Uterus (tissue), 4 donors: ENCODE measurements at regions of chr11 and their contacts with region 1.

Region 1: GRCh38 chr11:114179234-114179941 is 116.8 kb upstream of the NNMT start:
- DNase-seq: peak; percentile 84 to 96
- H3K4me3 ChIP-seq: peak overlapping the region; percentile 41 to 47
- H3K27ac ChIP-seq: peak overlapping the region; percentile 98 to 100
- H3K4me1 ChIP-seq: peaks cover 34 to 36% of the 10 kb centered on the region in 2 donors
- H3K27me3 ChIP-seq: no peaks in the 10 kb centered on the region
- CTCF ChIP-seq: peak in 3 of 4 experiments; percentile 2 to 39 (median 6)
- POLR2A ChIP-seq: peak; percentile 46 to 65

Region 2: DNA sequence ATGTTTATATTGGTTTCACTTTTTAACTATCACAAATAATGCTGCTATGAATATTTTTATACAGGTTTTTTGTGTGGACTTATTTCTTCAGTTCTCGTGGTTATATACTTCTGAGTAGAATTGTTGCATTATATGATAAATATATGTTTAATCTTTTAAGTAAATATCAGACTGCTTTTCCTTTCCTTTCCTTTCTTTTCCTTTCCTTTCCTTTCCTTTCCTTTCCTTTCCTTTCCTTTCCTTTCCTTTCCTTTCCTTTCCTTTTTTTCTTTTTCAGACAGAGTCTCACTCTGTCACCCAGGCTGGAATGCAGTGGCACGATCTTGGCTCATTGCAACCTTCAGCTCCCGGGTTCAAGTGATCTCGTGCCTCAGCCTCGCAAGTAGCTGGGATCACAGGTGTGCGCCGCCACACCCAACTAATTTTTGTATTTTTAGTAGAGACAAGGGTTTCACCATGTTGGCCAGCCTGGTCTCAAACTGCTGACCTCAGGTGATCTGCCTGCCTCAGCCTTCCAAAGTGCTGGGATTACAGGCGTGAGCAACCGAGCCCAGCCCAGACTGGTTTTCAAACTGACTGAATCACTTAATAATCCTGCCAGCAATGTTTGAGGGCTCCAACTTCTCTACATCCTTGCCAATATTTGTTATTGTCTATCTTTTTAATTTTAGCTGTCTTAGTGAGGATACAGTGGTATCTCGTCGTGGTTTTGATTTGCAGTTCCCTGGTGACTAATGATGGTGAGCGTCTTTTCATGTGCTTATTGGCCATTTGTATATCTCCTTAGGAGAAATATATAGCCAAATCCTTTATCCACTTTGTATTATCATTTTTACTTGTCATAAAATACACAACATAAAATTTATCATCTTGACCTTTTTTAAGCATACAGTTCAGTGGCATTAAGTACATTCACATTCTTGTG is 252.9 kb before region 1 on chr11:
- intact Hi-C with region 1: no loop called
- DNase-seq: no peak
- H3K4me3 ChIP-seq: no peak overlapping the region
- H3K27ac ChIP-seq: no peak overlapping the region
- H3K4me1 ChIP-seq: no peaks in the 10 kb centered on the region
- H3K27me3 ChIP-seq: no peaks in the 10 kb centered on the region
- CTCF ChIP-seq: no peak
- POLR2A ChIP-seq: no peak

Region 3: GRCh38 chr11:114040706-114041211 is 138.6 kb before region 1 on chr11:
- intact Hi-C with region 1: loop called (anchors 10 kb)
- DNase-seq: peak; percentile 54 to 78
- H3K4me3 ChIP-seq: no peak overlapping the region
- H3K27ac ChIP-seq: peak overlapping the region; percentile 85 to 88
- H3K4me1 ChIP-seq: no peaks in the 10 kb centered on the region
- H3K27me3 ChIP-seq: no peaks in the 10 kb centered on the region
- CTCF ChIP-seq: no peak
- POLR2A ChIP-seq: no peak

Region 4: GRCh38 chr11:114511538-114511937 is 332.1 kb after region 1 on chr11:
- intact Hi-C with region 1: no loop called
- DNase-seq: no peak
- H3K4me3 ChIP-seq: no peak overlapping the region
- H3K27ac ChIP-seq: no peak overlapping the region
- H3K4me1 ChIP-seq: no peaks in the 10 kb centered on the region
- H3K27me3 ChIP-seq: no peaks in the 10 kb centered on the region
- CTCF ChIP-seq: no peak
- POLR2A ChIP-seq: no peak